SK-N-SH (cell line): ENCODE measurements at regions of chr11 and their contacts with region 1.

Region 1: DNA sequence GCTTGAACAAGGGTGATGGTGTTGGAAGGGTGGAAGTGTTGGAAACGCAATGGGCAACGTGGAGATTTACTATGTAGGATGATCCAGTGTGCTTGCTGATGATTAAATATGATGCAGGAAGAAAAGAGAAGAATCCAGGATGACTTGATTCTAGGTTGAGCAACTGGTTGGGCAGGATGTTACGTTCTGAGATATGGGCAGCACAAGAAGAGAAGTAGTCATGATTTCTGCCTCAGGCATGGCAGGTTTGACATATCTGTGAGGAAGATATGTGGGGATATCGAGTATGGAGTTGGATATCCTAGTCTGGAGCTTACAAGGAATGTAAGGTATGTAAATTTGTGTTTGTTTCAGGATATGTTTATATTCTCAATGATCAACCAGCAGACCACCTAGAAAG is 1.9 kb downstream of the OR52K1 start:
- DNase-seq: no peak
- H3K4me3 ChIP-seq: no peak overlapping the region
- H3K27ac ChIP-seq: no peak overlapping the region
- H3K4me1 ChIP-seq: no peaks in the 10 kb centered on the region
- H3K27me3 ChIP-seq: peaks cover 7% of the 10 kb centered on the region; the same call in 1 of the 2 replicates
- CTCF ChIP-seq: no peak
- EP300 ChIP-seq: no peak
- RAD21 ChIP-seq: no peak

Region 2: DNA sequence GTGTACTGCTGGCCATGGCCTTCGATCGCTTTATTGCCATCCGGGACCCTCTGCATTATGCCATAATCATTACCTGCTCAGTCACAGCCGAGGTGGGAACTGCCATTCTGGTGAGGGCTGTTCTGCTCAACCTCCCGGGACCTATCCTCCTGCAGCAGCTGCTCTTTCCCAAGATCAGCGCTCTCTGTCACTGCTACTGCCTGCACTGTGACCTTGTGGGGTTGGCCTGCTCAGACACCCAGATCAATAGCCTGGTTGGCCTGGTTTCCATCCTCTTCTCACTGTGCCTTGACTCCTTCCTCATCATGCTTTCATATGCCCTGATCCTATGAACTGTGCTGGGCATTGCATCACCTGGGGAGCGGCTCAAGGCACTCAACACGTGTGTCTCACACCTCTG is 65.9 kb before region 1 on chr11:
- CTCF ChIA-PET with region 1: no interaction called
- POLR2A ChIA-PET with region 1: no interaction called
- DNase-seq: no peak
- H3K4me3 ChIP-seq: no peak overlapping the region
- H3K27ac ChIP-seq: no peak overlapping the region
- H3K4me1 ChIP-seq: no peaks in the 10 kb centered on the region
- H3K27me3 ChIP-seq: no peaks in the 10 kb centered on the region; the same call in 1 of the 2 replicates
- CTCF ChIP-seq: no peak
- EP300 ChIP-seq: no peak
- RAD21 ChIP-seq: no peak

Region 3: DNA sequence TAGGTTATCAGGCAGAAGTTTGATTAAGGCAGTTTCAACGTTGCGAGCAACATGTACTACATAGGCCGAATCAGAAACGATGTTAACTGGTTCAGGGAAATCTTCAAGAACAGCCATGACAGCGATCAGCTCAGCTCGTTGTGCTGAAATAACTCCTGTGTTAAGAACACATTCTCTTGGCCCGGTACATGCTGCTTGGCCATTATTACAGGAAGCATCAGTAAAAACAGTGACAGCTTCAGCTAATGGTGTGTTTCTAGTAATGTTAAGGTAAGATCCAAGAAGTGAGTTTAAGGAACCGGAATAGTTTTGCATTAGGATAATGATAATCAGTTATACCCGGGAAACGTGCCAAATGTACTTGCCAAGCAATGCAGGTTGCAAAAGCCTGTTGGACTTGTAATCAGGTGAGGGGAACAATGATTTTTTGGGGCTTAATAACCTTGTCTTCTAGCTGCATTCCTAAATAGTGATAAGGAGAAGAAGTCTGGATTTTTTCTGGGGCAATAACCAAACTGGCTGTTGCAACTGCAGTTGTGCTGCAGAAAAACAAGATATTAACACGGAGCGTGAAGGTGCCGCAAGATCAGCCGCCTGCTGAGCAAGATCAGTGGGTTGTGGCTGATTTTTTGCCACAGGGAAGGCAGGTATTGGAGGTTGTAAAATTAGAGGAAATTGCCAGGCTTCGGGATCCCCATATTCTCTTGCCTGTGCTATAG is 12.4 kb after region 1 on chr11:
- CTCF ChIA-PET with region 1: interaction called, 14 read pairs
- POLR2A ChIA-PET with region 1: no interaction called
- DNase-seq: no peak
- H3K4me3 ChIP-seq: no peak overlapping the region
- H3K27ac ChIP-seq: no peak overlapping the region
- H3K4me1 ChIP-seq: no peaks in the 10 kb centered on the region; a peak in 1 of 4 replicates
- H3K27me3 ChIP-seq: peaks cover 49% of the 10 kb centered on the region
- CTCF ChIP-seq: no peak
- EP300 ChIP-seq: no peak
- RAD21 ChIP-seq: no peak